WTC11 (cell line): ENCODE measurements at regions of chr10 and their contacts with region 1.

Region 1: DNA sequence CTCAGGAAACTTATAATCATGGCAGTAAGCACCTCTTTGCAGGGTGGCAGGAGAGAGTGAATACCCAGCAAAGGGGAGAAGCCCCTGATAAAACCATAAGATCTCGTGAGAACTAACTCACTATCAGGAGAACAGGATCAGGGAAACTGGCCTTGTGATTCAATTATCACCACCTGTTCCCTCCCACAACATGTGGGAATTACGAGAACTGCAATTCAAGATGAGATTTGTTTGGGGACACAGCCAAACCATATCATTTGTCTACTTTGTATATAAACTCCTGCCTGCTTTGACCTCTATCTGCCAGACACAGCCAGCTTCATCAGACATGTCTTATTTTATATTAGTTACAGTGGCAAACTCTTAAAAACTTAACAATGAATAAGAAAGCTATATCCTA is 50.4 kb downstream of the ARMC3 start:
- DNase-seq: no peak
- ATAC-seq: no peak
- H3K4me3 Mint-ChIP-seq: no peak overlapping the region
- H3K27ac Mint-ChIP-seq: no peak overlapping the region
- H3K4me1 Mint-ChIP-seq: peaks cover 26% of the 10 kb centered on the region
- H3K27me3 Mint-ChIP-seq: no peaks in the 10 kb centered on the region
- CTCF ChIP-seq: no peak

Region 2: GRCh38 chr10:22420787-22421517 is 557.3 kb before region 1 on chr10:
- CTCF ChIA-PET with region 1: no interaction called
- POLR2A ChIA-PET with region 1: interaction called, 10 read pairs
- DNase-seq: no peak
- ATAC-seq: no peak
- H3K4me3 Mint-ChIP-seq: no peak overlapping the region
- H3K27ac Mint-ChIP-seq: no peak overlapping the region
- H3K4me1 Mint-ChIP-seq: no peaks in the 10 kb centered on the region
- H3K27me3 Mint-ChIP-seq: peaks cover 3% of the 10 kb centered on the region; the same call in 1 of the 2 replicates
- CTCF ChIP-seq: no peak

Region 3: GRCh38 chr10:23280420-23281043 is 302.2 kb after region 1 on chr10:
- CTCF ChIA-PET with region 1: no interaction called
- POLR2A ChIA-PET with region 1: no interaction called
- DNase-seq: peak; percentile 38
- ATAC-seq: peak; percentile 88
- H3K4me3 Mint-ChIP-seq: peak overlapping the region; percentile 42
- H3K27ac Mint-ChIP-seq: peak overlapping the region; percentile 70
- H3K4me1 Mint-ChIP-seq: peaks cover 25% of the 10 kb centered on the region
- H3K27me3 Mint-ChIP-seq: no peaks in the 10 kb centered on the region; the same call in 1 of the 2 replicates
- CTCF ChIP-seq: no peak